Posterior vena cava (tissue), 2 donors: ENCODE measurements at regions of chr18 and their contacts with region 1.

Region 1: DNA sequence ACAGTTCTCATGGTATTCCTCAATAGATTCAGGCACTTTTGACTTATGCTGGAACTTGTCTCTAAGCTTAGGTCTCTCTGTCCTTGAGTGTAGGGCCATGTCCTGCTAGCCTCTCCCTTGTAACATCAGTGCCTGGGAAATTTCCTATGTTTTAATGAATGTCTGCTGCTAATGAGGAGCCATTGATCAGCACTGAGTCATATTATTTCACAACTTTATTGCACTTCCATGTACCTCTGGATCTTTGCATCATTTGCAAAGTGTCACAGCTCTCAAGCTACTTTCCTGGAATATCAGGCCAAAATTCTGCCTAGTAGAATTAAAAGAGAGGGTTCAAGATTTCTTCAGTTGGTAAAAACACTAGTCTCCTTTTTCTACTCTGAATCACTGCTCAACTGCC is 102.5 kb downstream of the GAREM1 start:
- DNase-seq: no peak

Region 2: DNA sequence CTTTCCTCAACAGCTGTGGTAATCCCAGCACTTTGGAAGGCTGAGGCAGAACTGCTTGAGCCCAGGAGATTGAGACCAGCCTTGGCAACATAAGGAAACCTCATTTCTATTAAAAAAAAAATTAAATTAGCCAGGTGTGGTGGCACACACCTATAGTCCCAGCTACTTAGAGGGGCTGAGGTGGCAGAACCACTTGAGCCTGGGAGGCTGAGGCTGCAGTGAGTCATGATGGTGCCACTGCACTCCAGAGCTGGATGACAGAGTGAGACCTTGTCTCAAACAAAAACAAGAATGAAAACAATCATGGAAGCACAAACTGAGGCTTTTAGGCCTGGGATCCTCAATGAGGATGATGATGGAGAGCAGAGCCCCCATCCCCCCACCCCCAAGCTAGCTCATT is 82.7 kb after region 1 on chr18:
- intact Hi-C with region 1: loop called in 1 of 2 experiments (anchors 1 kb)
- DNase-seq: no peak